Naive thymus-derived CD8-positive, alpha-beta T cell (primary cell): ENCODE measurements at regions of chr12 and their contacts with region 1.

Region 1: GRCh38 chr12:27779920-27780611 is at the starts of genes KLHL42 and MANSC4:
- DNase-seq: peak; percentile 38 to 84 (median 62)
- ATAC-seq: peak; percentile 82 to 90
- H3K4me3 Mint-ChIP-seq: peak within 1 kb of the TSS; percentile 78 to 96 (median 90)
- H3K27ac Mint-ChIP-seq: peak within 1 kb of the TSS; percentile 75 to 94 (median 89)
- H3K4me1 Mint-ChIP-seq: peaks cover 14 to 46% (median 35%) of the 10 kb centered on the region in 4 donors
- H3K27me3 Mint-ChIP-seq: peaks cover 0 to under 1% (median 0%) of the 10 kb centered on the region in 5 donors
- polyA plus RNA-seq, gene KLHL42: 8.5 to 11.3 (median 11.0) TPM
- polyA plus RNA-seq, gene MANSC4: not detected

Region 2: GRCh38 chr12:27710592-27711316 is 69.3 kb before region 1 on chr12 and contains the start of gene MRPS35:
- POLR2A ChIA-PET with region 1: interaction called, 14 read pairs
- DNase-seq: peak; percentile 83 to 94 (median 92)
- ATAC-seq: peak; percentile 96 to 97
- H3K4me3 Mint-ChIP-seq: peak within 1 kb of the TSS; percentile 92 to 100 (median 98)
- H3K27ac Mint-ChIP-seq: peak within 1 kb of the TSS; percentile 92 to 99 (median 98)
- H3K4me1 Mint-ChIP-seq: peaks cover 16 to 42% (median 38%) of the 10 kb centered on the region in 4 donors
- H3K27me3 Mint-ChIP-seq: peaks cover 0 to 2% (median 0%) of the 10 kb centered on the region in 5 donors
- polyA plus RNA-seq, gene MRPS35: 57.7 to 74.4 (median 65.9) TPM

Region 3: DNA sequence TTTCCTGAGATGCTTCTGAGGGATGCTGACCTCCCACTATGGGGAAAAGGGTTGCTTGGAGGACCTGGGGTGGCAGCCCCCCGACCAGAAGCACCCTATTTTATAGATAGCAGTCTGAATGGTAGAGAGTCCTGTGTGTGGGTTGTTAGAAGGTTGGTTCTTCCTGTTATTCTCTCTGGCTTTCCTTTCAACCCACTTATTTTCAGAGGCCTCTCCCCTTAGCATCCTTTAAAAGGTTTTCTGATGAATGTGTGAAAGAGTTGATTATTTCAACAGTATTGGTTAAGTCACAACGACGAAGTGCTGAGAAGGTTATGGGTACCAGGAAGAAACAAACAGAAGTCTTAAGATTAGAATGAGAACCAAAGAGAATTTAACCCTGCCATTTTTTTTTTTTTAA is 20.8 kb after region 1 on chr12:
- POLR2A ChIA-PET with region 1: interaction called, 11 read pairs
- DNase-seq: peak in 1 of 10 donors; percentile 18
- ATAC-seq: peak; percentile 36 to 65
- H3K4me3 Mint-ChIP-seq: peak overlapping the region in 8 of 10 donors; percentile 14 to 73 (median 34)
- H3K27ac Mint-ChIP-seq: peak overlapping the region; percentile 26 to 90 (median 78)
- H3K4me1 Mint-ChIP-seq: peaks cover 18 to 37% (median 23%) of the 10 kb centered on the region in 4 donors
- H3K27me3 Mint-ChIP-seq: no peaks in the 10 kb centered on the region

Region 4: DNA sequence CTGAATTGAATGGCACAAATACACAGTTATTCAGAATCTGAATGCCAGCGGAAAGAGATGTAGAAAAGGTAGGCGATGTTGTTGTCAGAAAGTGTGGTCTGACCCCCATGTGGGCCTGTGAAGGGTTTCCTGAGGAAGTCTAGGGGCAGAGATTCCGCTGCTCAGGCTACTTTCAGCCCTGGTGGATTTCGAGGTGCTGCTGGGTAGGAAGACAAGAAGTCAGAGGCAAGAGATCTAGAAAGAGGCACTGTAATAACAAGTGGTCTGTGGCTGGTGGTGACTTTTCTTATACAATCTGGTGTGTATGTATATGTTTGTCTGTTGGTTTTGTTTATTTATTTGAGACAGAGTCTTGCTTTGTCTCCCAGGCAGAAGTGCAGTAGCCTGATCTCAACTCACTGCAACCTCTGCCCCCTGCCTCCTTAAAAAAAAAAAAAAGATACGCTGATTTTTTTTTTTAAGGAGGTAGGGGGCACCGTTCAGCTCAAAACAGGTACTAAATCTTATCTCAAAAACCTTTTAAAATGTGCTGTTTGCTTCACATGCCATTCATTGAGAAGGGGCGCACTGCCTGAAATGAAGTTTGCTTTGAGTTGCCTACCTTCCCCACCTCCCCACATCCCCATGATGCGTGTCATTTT is 27.1 kb after region 1 on chr12:
- POLR2A ChIA-PET with region 1: interaction called, 10 read pairs
- DNase-seq: peak in 5 of 10 donors; percentile 8 to 39 (median 19)
- ATAC-seq: peak; percentile 80 to 88
- H3K4me3 Mint-ChIP-seq: peak overlapping the region; percentile 53 to 88 (median 76)
- H3K27ac Mint-ChIP-seq: peak overlapping the region; percentile 26 to 98 (median 75)
- H3K4me1 Mint-ChIP-seq: peaks cover 5 to 37% (median 21%) of the 10 kb centered on the region in 4 donors
- H3K27me3 Mint-ChIP-seq: peaks cover 0 to 17% (median 8%) of the 10 kb centered on the region in 5 donors

Region 5: DNA sequence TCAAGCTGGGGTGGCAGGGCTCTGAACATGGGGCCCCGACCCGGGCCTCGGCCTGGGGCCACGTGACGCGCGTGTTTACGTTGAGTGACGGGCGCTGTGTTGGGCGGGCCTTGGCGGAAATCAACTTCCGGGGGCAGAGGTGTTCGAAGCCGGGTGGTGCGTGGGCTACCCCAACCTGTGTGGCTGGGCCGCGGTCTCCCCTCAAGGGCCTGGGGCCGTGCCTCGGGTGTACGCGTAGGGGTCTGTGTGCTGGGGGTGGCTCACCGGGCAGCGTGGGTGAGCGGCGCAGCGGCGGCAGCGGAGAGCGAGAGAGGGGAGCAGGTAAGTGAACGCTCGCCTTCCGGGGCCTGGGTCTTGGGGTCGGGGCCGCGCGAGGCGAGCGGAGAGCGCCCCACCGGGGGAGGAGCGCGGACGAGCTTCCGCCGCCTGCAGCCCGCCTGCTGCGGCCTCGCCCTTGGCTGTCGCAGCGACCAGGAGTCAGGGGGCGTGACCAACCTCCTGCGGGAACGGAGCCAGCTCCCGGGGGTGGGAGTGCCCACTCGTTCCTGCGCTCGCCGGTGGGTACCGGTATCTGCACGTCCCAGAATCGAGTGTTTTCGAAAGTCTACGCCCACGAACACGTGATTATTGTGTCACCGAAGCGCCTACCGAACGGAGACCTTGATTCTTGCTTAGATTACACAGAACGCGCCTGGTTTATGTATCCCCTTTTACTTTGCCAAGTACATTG is 410.4 kb after region 1 on chr12 and contains the start of gene CCDC91:
- POLR2A ChIA-PET with region 1: interaction called, 13 read pairs
- DNase-seq: peak; percentile 83 to 97 (median 94)
- ATAC-seq: peak; percentile 78 to 80
- H3K4me3 Mint-ChIP-seq: peak within 1 kb of the TSS; percentile 95 to 99 (median 96)
- H3K27ac Mint-ChIP-seq: peak within 1 kb of the TSS; percentile 92 to 100 (median 100)
- H3K4me1 Mint-ChIP-seq: peaks cover 28 to 66% (median 62%) of the 10 kb centered on the region in 4 donors
- H3K27me3 Mint-ChIP-seq: no peaks in the 10 kb centered on the region
- polyA plus RNA-seq, gene CCDC91: 57.7 to 73.5 (median 70.1) TPM